HCT116 (cell line): ENCODE measurements at regions of chr9 and their contacts with region 1.

Region 1: GRCh38 chr9:12972608-12973589 is 198.1 kb downstream of the LURAP1L start:
- DNase-seq: no peak
- ATAC-seq: 0 out of 2 replicates have a peak, but pooled peaks have one; percentile 53
- H3K4me3 ChIP-seq: no peak overlapping the region
- H3K27ac ChIP-seq: no peak overlapping the region
- H3K4me1 ChIP-seq: no peaks in the 10 kb centered on the region
- H3K27me3 ChIP-seq: no peaks in the 10 kb centered on the region
- CTCF ChIP-seq: no peak
- POLR2A ChIP-seq: no peak
- RAD21 ChIP-seq: no peak

Region 2: DNA sequence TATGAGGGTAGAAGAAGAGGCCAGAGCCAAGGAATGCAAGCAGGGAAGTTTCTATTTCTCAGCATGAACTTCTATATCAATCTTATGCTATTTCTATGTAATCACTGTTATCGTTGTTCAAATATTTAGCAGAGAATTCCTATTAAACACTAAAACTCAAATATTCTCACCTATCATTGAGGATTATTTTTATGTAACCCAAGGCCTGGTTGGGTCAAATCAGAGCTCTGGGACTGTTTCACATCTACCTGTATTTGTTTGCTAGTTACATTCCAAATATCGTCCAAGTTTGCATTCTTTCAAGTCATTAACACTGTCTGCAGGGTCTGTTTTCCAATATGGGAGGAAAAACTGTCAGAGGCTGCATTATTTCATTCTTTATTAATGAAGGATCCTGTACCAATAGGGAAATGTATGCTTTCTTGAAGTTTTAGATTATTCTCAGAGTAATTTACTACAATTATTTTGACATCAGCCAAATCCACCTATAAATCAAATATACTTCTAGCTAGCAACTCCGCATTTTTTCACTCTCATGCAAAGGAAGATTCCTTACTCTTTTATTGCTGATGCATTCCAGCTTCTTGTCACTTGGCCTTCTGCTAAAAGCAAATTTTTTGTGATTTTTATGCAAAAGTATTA is 145.9 kb before region 1 on chr9:
- CTCF ChIA-PET with region 1: no interaction called
- POLR2A ChIA-PET with region 1: no interaction called
- RAD21 ChIA-PET with region 1: no interaction called
- intact Hi-C with region 1: no loop called
- DNase-seq: no peak
- ATAC-seq: no peak
- H3K4me3 ChIP-seq: no peak overlapping the region
- H3K27ac ChIP-seq: no peak overlapping the region
- H3K4me1 ChIP-seq: no peaks in the 10 kb centered on the region
- H3K27me3 ChIP-seq: no peaks in the 10 kb centered on the region
- CTCF ChIP-seq: no peak
- POLR2A ChIP-seq: no peak
- RAD21 ChIP-seq: no peak

Region 3: DNA sequence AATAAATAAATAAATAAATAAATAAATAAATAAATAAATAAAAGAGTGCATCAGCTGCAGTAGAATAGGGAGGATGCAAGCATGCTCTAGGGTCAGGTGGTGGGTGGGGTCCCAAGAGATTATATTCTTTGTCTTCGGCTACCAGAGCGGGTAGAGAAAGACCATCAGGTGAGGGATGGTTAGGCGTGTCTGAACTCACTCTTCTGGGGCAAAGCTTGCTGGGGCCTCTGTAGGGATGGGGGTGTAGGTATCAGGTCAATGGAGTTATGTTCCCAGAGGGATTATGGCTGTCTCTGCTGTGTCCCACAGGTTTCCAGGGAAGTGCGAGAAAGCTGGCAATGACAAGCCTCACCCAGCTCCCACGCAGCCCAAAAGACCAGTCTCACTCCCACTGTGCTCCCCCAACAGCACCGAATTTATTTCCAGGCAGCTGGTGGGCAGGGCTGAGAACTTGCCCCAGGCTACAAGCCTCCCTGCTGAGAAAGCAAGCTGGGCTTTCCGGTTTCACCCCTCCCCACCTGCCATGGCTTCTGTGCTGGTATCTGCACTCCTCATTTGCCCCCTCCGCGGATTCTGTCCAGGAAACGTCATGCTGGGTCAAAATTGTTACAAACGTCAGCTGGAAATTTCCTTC is 17.3 kb before region 1 on chr9:
- CTCF ChIA-PET with region 1: no interaction called
- POLR2A ChIA-PET with region 1: no interaction called
- RAD21 ChIA-PET with region 1: no interaction called
- intact Hi-C with region 1: loop called (anchors 2 kb)
- DNase-seq: no peak
- ATAC-seq: no peak
- H3K4me3 ChIP-seq: no peak overlapping the region
- H3K27ac ChIP-seq: no peak overlapping the region
- H3K4me1 ChIP-seq: no peaks in the 10 kb centered on the region
- H3K27me3 ChIP-seq: no peaks in the 10 kb centered on the region
- CTCF ChIP-seq: no peak
- POLR2A ChIP-seq: no peak
- RAD21 ChIP-seq: no peak